ENCODE measurements at regions of chr16 and their contacts with region 1.

Region 1: GRCh38 chr16:1677802-1678496 is at the start of gene JPT2:
- DNase-seq: peak; percentile 95 to 99 (median 96)
- H3K4me3 ChIP-seq: peak within 1 kb of the TSS; percentile 70
- H3K27ac ChIP-seq: peak within 1 kb of the TSS in 1 of 2 donors; percentile 46
- H3K4me1 ChIP-seq: peaks cover 5% of the 10 kb centered on the region
- H3K27me3 ChIP-seq: no peaks in the 10 kb centered on the region
- CTCF ChIP-seq: no peak
- EP300 ChIP-seq: no peak
- POLR2A ChIP-seq: no peak
- total RNA-seq, gene JPT2: 14.4 to 51.8 (median 44.1) TPM

Region 2: GRCh38 chr16:1398826-1399601 is 278.9 kb before region 1 on chr16:
- intact Hi-C with region 1: no loop called
- DNase-seq: peak in 1 of 5 donors; percentile 18
- H3K4me3 ChIP-seq: no peak overlapping the region
- H3K27ac ChIP-seq: no peak overlapping the region
- H3K4me1 ChIP-seq: no peaks in the 10 kb centered on the region
- H3K27me3 ChIP-seq: no peaks in the 10 kb centered on the region
- CTCF ChIP-seq: no peak
- EP300 ChIP-seq: no peak
- POLR2A ChIP-seq: no peak

Region 3: GRCh38 chr16:1637526-1637925 is 40.4 kb before region 1 on chr16:
- intact Hi-C with region 1: loop called in 1 of 4 experiments (anchors 1 kb)
- DNase-seq: no peak
- H3K4me3 ChIP-seq: no peak overlapping the region
- H3K27ac ChIP-seq: no peak overlapping the region
- H3K4me1 ChIP-seq: peaks cover 2% of the 10 kb centered on the region
- H3K27me3 ChIP-seq: no peaks in the 10 kb centered on the region
- CTCF ChIP-seq: no peak
- EP300 ChIP-seq: no peak
- POLR2A ChIP-seq: no peak

Region 4: DNA sequence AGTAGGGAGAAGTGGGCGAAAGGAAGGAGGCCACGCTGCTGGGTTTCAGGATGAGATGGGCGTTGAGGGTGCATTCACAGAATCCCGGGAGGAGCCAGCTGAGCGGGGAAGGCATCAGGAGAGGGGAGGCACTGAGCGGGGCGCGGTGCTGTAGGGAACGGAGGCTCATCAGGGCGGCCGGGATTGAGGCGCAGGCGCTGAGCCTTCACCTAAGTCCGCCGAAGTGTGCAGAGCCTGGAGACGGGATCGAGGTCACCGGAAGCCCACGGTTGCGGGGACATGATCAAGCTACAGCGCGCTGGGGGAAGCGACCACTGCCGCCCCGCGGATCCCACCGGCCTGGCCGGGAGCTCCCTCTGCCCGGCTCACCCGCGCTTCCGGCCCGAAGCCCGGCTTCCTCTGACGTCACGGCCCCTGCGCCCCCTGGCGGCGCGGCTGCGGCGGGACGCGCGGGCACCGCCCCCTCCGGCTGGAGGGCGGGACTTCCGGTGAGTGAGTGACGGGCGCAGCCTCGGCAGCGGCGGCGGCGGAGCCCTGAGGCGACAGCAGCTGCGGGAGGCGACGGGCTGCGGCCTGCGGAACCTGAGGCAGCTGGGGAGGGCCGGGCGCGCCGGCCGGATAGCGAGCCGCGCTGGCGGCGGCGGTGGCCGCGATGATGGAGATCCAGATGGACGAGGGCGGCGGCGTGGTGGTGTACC is 27.9 kb after region 1 on chr16 and contains the start of gene MAPK8IP3:
- intact Hi-C with region 1: loop called in 1 of 4 experiments (anchors 2 kb)
- DNase-seq: peak; percentile 88 to 98 (median 93)
- H3K4me3 ChIP-seq: peak within 1 kb of the TSS; percentile 91
- H3K27ac ChIP-seq: peak within 1 kb of the TSS in 1 of 2 donors; percentile 85
- H3K4me1 ChIP-seq: peaks cover 14% of the 10 kb centered on the region
- H3K27me3 ChIP-seq: no peaks in the 10 kb centered on the region
- CTCF ChIP-seq: peak; percentile 91 to 100 (median 100)
- EP300 ChIP-seq: no peak
- POLR2A ChIP-seq: peak; percentile 93
- total RNA-seq, gene MAPK8IP3: 50.3 to 117 (median 75.5) TPM